ENCODE measurements at regions of chr5 and their contacts with region 1.

Region 1: GRCh38 chr5:14958196-14958595 is 86.6 kb upstream of the ANKH start:
- DNase-seq: no peak
- H3K4me3 ChIP-seq: no peak overlapping the region
- H3K27ac ChIP-seq: no peak overlapping the region
- H3K4me1 ChIP-seq: no peaks in the 10 kb centered on the region
- H3K27me3 ChIP-seq: no peaks in the 10 kb centered on the region

Region 2: DNA sequence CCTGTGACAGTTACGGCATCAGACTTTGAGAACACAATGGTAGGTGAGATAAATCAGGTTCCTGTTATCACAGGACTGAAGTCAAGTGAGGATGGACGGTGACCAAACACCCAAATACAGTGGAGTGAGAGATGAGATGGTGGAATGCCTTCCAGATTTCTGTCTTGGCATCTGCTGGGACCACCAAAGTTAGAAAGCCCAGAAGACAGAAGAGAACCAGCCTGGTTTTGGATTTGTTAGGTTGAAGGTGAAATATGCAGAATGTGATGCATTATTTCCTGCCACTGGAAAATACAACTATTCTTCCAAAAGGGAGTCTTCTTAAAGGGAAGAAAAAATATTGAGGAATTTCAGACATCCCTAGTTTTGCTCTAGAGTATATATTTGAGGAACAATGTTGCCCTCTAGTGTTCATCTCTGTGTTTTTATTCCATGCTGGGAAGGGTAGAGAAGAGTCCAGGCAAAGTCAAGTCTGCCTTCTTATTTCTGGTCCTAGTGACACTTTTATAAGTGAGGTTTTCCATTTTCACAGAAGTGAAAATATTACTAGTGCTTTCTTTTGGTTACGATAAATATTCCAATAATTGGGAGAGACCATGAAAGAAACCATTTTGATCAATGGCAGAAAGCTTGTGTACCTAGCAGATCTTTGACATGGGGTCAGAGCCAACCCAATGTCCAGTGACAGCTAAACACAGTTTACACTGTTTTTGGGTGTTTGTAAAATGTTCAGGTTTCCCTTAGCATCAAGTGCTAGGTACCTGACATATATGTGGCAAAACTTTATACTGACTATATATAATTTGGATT is 55.7 kb after region 1 on chr5:
- CTCF ChIA-PET with region 1: interaction called, 12 read pairs
- POLR2A ChIA-PET with region 1: no interaction called
- DNase-seq: peak; percentile 38 to 53 (median 47)
- H3K4me3 ChIP-seq: no peak overlapping the region
- H3K27ac ChIP-seq: no peak overlapping the region
- H3K4me1 ChIP-seq: peaks cover 0 to 1% (median 0%) of the 10 kb centered on the region in 4 experiments
- H3K27me3 ChIP-seq: peaks cover 0 to 1% (median 0%) of the 10 kb centered on the region in 5 experiments